Right lobe of liver (tissue), 6 donors: ENCODE measurements at regions of chr16 and their contacts with region 1.

Region 1: GRCh38 chr16:73172241-73172972 is 124.5 kb upstream of the ZFHX3 start:
- DNase-seq: peak in 2 of 3 donors; percentile 72 to 76
- ATAC-seq: peak; percentile 65 to 80 (median 74)
- H3K4me3 ChIP-seq: no peak overlapping the region
- H3K27ac ChIP-seq: peak overlapping the region in 1 of 3 donors; percentile 66
- H3K4me1 ChIP-seq: no peaks in the 10 kb centered on the region
- H3K27me3 ChIP-seq: no peaks in the 10 kb centered on the region
- CTCF ChIP-seq: peak in 3 of 4 donors; percentile 12 to 39 (median 14)
- POLR2A ChIP-seq: no peak

Region 2: DNA sequence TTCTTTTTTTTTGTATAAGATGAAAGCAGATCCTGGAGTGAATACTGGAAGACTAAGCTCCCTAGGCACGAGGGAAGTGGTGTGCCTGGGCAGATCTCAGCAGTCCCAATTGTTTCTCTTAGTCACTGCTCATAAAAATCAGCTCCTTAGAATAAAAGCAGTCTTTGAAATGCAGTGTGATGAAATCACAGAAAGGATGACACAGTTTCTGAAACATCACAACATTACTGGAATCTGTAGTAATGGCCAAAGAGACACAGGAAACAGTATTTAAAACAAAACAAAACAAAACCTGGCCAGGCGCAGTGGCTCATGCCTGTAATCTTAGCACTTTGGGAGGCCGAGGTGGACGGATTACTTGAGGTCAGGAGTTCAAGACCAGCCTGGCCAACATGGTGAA is 89.8 kb before region 1 on chr16:
- intact Hi-C with region 1: loop called in 1 of 2 experiments (anchors 10 kb)
- DNase-seq: no peak
- ATAC-seq: peak in 1 of 4 donors; percentile 51
- H3K4me3 ChIP-seq: no peak overlapping the region
- H3K27ac ChIP-seq: no peak overlapping the region
- H3K4me1 ChIP-seq: peaks cover 0 to 2% (median 0%) of the 10 kb centered on the region in 4 donors
- H3K27me3 ChIP-seq: no peaks in the 10 kb centered on the region
- CTCF ChIP-seq: no peak
- POLR2A ChIP-seq: no peak